Sigmoid colon (tissue), 7 donors: ENCODE measurements at regions of chr1 and their contacts with region 1.

Region 1: DNA sequence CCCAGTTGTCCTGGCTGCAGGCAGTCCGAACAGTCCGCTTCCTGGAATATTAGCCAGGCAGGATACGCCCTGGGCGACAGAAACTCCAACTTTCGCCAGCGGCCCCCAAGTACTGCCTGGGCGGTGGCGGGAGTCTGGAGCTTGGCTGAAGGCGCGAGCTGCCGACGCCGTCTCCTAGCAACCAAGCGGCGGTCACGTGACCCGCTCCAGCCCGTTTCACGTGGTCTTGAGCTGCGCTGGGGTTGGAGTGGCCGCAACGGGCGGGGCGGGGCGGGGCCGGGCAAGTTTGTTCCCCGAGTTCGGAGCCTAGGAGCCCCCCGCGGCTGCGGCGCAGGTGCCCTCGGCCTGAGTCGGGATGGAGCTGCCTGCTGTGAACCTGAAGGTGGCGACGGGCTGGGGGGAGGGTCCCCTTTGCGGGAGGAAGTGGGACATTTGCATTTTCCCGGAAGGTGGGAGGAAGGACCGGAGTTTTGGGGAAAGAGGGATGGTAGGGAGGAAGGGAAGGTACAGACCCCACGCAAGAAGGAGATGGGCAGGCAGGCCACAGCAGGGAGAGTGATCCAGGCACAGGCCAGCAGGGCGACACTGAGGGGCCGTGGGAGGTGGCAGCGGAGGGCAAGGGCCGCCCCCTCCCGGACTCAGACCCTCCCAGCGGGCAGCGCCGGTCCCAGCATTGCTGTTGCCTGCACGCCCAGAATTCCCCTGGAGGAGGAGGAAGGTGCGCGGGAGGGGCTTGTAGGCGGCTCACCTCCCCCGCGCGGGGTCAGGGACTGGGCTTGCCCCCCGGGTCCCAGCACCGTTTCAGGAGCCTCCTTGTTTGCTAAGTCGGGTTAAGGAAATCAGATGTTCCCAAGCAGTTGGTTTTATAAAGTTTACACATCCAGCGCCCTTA is at the start of gene AGTRAP:
- DNase-seq: peak; percentile 99
- H3K4me3 ChIP-seq: peak within 1 kb of the TSS; percentile 72 to 96 (median 86)
- H3K27ac ChIP-seq: peak within 1 kb of the TSS; percentile 88 to 90 (median 88)
- H3K4me1 ChIP-seq: peaks cover 0 to 41% (median 33%) of the 10 kb centered on the region in 4 donors
- H3K27me3 ChIP-seq: no peaks in the 10 kb centered on the region
- CTCF ChIP-seq: peak in 1 of 4 experiments; percentile 10
- EP300 ChIP-seq: no peak
- POLR2A ChIP-seq: peak in 1 of 2 donors; percentile 22
- total RNA-seq, gene AGTRAP: 22.8 to 58.3 (median 33.6) TPM

Region 2: GRCh38 chr1:11272832-11273594 is 463.1 kb before region 1 on chr1 and contains the start of gene UBIAD1:
- intact Hi-C with region 1: loop called (anchors 10 kb)
- DNase-seq: peak; percentile 94
- H3K4me3 ChIP-seq: peak within 1 kb of the TSS; percentile 71 to 89 (median 84)
- H3K27ac ChIP-seq: peak within 1 kb of the TSS; percentile 92 to 95 (median 94)
- H3K4me1 ChIP-seq: peaks cover 0 to 35% (median 27%) of the 10 kb centered on the region in 4 donors
- H3K27me3 ChIP-seq: no peaks in the 10 kb centered on the region
- CTCF ChIP-seq: no peak
- EP300 ChIP-seq: no peak
- POLR2A ChIP-seq: peak in 1 of 2 donors; percentile 33
- total RNA-seq, gene UBIAD1: 8.2 to 13.6 (median 11.2) TPM

Region 3: DNA sequence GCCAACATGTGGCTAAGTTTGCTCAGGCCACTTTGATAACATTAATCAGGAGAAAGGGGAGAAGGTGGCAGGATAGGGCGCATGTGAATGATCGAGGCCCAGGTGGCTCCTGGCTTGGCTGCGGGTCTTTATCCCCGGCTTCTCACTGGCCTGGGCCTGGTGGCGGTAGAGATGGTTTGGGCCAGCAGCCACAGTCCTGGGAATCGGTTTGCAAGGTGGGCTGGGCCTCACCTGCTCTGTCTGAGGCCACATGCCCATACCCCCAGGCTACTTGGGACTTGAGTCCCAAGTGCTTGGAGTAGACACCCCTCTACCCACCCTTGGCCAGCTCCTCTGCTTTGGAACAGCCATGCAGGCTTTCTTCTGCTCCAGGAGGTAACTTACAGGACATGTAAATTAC is 306.9 kb before region 1 on chr1:
- intact Hi-C with region 1: no loop called
- DNase-seq: no peak
- H3K4me3 ChIP-seq: no peak overlapping the region
- H3K27ac ChIP-seq: no peak overlapping the region
- H3K4me1 ChIP-seq: no peaks in the 10 kb centered on the region
- H3K27me3 ChIP-seq: peaks cover 0 to 5% (median 0%) of the 10 kb centered on the region in 3 donors
- CTCF ChIP-seq: no peak
- EP300 ChIP-seq: no peak
- POLR2A ChIP-seq: no peak

Region 4: DNA sequence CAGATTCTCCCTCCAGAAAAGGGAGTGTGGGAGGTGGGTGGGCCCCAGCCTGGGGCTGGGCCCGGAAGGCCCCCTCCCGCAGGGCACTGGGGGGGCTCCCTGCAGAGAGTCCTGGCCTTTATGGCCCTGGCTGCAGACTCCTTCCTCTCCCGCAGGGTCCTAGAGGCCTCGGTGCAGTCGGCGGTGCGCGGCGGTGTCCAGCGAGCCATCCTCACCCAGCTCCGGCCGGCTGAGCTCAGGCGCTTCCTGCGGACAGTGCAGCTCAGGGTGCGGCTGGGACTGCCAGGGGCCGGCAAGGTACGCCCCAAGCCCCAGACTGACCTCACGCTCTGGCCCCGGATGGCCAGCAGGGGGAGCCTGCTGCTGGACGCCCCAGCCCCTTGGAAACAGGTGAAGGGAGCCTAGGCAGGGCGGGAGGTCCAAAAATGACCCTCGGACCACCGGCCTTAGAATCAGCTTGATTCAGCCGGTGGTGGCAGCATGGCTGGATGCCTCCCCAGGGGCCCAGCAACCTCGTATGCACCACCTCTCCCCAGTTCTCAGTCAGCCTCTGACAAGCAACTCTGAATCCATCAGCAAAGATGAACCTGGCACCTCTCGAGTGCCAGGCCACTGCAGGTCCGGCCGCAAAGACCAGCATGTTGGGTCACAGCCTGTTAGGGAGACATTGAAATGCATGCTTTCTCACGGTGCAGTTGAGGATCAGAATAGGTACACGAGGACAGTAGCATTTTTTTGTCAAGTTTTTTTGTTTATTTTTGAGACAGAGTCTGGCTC is 49.1 kb after region 1 on chr1:
- intact Hi-C with region 1: loop called (anchors 5 kb)
- DNase-seq: peak; percentile 87
- H3K4me3 ChIP-seq: peak overlapping the region; percentile 1 to 40 (median 24)
- H3K27ac ChIP-seq: peak overlapping the region in 3 of 4 donors; percentile 15 to 54 (median 45)
- H3K4me1 ChIP-seq: peaks cover 0 to 57% (median 48%) of the 10 kb centered on the region in 4 donors
- H3K27me3 ChIP-seq: no peaks in the 10 kb centered on the region
- CTCF ChIP-seq: peak; percentile 67 to 87 (median 76)
- EP300 ChIP-seq: no peak
- POLR2A ChIP-seq: no peak

Region 5: DNA sequence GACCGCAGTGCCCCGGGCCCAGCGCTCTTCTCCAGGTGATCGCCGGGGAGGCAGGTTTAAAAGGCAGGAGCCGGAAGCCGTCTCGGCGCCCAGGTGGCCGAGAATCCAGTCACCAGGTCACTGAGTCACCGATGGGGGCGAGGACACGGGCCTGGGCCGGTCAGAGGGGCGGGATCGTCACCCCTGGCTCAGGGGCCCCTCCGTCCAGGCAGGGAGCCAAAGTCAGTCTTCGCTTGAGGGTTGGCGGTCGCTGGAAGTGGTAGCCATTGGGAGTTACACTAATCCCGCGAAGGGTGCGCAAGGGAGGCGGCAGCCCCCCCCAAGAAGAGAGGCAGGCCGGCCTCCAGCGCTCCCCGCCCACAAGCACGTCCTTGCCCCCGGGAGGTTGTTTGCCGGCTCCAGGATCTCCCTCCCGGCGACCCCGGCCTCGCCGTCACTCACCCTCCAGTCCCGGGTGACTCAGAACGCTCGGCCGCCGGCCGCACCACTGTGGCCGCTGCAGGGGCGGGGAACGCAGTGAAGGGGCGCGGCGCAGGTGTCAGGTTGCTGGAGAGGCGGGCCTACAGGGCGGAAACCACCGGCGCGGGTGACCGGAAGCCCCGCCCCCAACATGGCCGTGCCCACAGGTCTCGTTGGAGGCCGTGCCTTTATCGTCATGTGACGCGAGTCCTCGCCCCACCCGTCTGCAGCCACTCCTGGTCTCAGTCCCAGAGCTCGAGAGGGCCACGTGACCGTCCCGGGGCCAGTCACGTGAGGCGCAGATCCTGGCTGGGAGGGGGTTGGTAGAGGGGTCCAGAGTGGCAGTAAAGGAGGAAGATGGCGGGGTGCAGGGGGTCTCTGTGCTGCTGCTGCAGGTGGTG is 69.6 kb after region 1 on chr1 and contains the starts of genes CLCN6 and MTHFR:
- intact Hi-C with region 1: loop called (anchors 2 kb)
- DNase-seq: peak; percentile 100
- H3K4me3 ChIP-seq: peak within 1 kb of the TSS; percentile 77 to 90 (median 80)
- H3K27ac ChIP-seq: peak within 1 kb of the TSS; percentile 95 to 99 (median 97)
- H3K4me1 ChIP-seq: peaks cover 0 to 61% (median 60%) of the 10 kb centered on the region in 4 donors
- H3K27me3 ChIP-seq: no peaks in the 10 kb centered on the region
- CTCF ChIP-seq: no peak
- EP300 ChIP-seq: peak in 2 of 4 donors; percentile 34 to 96
- POLR2A ChIP-seq: peak; percentile 92 to 98
- total RNA-seq, gene CLCN6: 12.1 to 19.7 (median 16.1) TPM
- total RNA-seq, gene MTHFR: 16.8 to 38.3 (median 27.9) TPM

Region 6: DNA sequence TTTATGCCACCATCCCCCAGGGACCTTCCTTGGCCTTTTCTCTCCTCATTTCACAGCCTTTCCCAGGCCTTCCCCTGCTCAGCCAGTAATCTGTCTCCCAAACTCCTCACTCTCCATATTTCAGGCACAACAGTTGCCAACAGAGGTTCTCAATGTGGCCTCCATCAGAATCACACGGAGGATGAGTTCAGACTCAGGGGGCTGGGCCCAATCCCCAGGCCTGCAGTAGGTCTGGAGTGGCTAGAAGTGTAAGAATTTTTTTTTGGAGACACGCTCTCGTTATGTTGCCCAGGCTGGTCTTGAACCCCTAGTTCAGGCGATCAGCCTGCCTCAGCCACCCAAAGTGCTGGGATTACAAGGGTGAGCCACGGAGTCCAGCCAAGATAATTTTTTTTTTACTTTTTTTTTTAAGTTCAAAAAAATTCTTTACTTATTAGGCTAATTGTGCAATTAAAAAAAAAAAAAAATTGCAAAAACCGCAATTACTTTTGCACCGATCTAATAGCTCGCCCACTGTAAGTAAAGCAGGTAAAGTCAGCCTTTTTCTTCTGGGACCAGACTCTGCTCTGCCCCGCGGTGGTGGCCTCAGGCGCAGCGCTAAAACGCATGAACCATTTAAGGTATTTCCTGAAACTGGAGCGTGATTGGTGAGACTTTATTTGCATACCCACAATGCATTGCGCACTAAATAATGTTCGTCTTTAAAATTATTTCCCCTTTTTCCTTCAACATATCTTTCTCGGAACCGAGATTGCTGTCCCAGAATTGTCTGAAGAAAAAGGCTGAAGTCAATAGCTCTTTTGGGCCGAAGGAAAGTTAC is 171.4 kb after region 1 on chr1:
- intact Hi-C with region 1: loop called (anchors 2 kb)
- DNase-seq: peak; percentile 97
- H3K4me3 ChIP-seq: peak overlapping the region in 3 of 4 donors; percentile 61 to 74 (median 65)
- H3K27ac ChIP-seq: peak overlapping the region; percentile 97 to 99 (median 98)
- H3K4me1 ChIP-seq: peaks cover 0 to 7% (median 0%) of the 10 kb centered on the region in 4 donors
- H3K27me3 ChIP-seq: no peaks in the 10 kb centered on the region
- CTCF ChIP-seq: peak; percentile 69 to 85 (median 72)
- EP300 ChIP-seq: no peak
- POLR2A ChIP-seq: no peak